Naive thymus-derived CD8-positive, alpha-beta T cell (primary cell): ENCODE measurements at regions of chr10 and their contacts with region 1.

Region 1: GRCh38 chr10:47311932-47312662 is 10.2 kb upstream of the GDF2 start:
- DNase-seq: peak; percentile 68 to 92 (median 82)
- ATAC-seq: peak; percentile 84 to 85
- H3K4me3 Mint-ChIP-seq: peak overlapping the region in 9 of 10 donors; percentile 31 to 79 (median 68)
- H3K27ac Mint-ChIP-seq: peak overlapping the region; percentile 80 to 93 (median 88)
- H3K4me1 Mint-ChIP-seq: peaks cover 20 to 37% (median 28%) of the 10 kb centered on the region in 4 donors
- H3K27me3 Mint-ChIP-seq: no peaks in the 10 kb centered on the region

Region 2: GRCh38 chr10:47024399-47025252 is 287.5 kb before region 1 on chr10:
- POLR2A ChIA-PET with region 1: interaction called, 16 read pairs
- DNase-seq: peak; percentile 51 to 83 (median 62)
- ATAC-seq: peak; percentile 88 to 97
- H3K4me3 Mint-ChIP-seq: no peak overlapping the region
- H3K27ac Mint-ChIP-seq: peak overlapping the region in 4 of 10 donors; percentile 10 to 84 (median 38)
- H3K4me1 Mint-ChIP-seq: peaks cover 0 to 12% (median 8%) of the 10 kb centered on the region in 4 donors
- H3K27me3 Mint-ChIP-seq: peaks cover 0 to 13% (median 4%) of the 10 kb centered on the region in 5 donors

Region 3: DNA sequence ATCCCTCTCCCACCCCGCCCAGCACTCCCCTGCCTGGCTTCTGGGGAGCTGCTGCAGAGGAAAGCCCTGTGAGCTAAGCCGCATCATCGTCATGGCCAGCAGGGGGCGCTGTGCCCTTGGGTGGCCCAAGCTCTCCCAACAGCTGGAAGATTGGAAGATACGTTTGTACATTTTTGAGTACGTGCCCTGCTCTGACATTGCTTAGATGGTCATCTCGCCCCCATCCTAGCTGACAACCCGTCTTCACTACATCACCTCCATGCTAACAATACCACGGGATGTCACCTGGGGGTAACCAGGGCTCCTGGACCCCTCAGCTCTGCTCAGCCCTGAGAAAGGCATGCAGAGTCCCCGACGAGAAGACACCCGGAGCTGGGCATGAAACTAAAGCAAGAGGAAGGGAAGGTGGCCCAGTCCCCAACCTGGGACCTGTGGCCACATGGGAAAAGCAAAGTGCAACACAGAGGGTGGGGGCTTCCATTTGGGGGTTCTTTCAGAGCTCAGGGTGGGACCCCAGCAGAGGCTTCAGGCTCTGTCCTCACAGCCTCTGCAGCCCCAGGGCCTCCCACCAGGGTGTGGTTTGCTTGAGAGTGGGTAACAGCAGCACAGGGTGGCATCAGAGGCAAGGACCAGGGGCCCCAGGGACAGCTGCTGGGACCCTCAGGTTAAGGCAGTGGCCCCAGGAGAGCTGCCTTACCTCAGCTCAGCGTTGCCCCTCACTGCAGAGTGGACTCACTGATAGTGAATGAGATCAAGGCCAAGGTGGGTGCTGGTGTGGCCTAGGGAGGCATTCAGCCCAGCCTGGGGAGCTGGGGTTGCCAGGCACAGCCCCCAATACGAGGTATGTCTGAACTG is 264.2 kb before region 1 on chr10:
- POLR2A ChIA-PET with region 1: interaction called, 23 read pairs
- DNase-seq: peak; percentile 49 to 83 (median 69)
- ATAC-seq: peak; percentile 76 to 87
- H3K4me3 Mint-ChIP-seq: peak overlapping the region in 4 of 10 donors; percentile 1 to 56 (median 26)
- H3K27ac Mint-ChIP-seq: peak overlapping the region in 9 of 10 donors; percentile 29 to 93 (median 70)
- H3K4me1 Mint-ChIP-seq: peaks cover 17 to 24% (median 21%) of the 10 kb centered on the region in 4 donors
- H3K27me3 Mint-ChIP-seq: no peaks in the 10 kb centered on the region

Region 4: GRCh38 chr10:47195274-47195885 is 116.7 kb before region 1 on chr10:
- POLR2A ChIA-PET with region 1: no interaction called
- DNase-seq: no peak
- ATAC-seq: no peak
- H3K4me3 Mint-ChIP-seq: no peak overlapping the region
- H3K27ac Mint-ChIP-seq: peak overlapping the region in 2 of 10 donors; percentile 22 to 46
- H3K4me1 Mint-ChIP-seq: peaks cover 0 to 30% (median 8%) of the 10 kb centered on the region in 4 donors
- H3K27me3 Mint-ChIP-seq: no peaks in the 10 kb centered on the region